Activated CD8-positive, alpha-beta T cell treated with anti-CD3 and anti-CD28 coated beads, Interleukin-2, amount 10 ng/mL, durations not matched to agents 7 days and 5 days (primary cell): ENCODE measurements at regions of chr10 and their contacts with region 1.

Region 1: GRCh38 chr10:6401562-6402348 is 178.3 kb downstream of the PRKCQ start:
- DNase-seq: peak; percentile 75
- ATAC-seq: peak; percentile 92
- H3K4me3 Mint-ChIP-seq: no peak overlapping the region
- H3K27ac Mint-ChIP-seq: peak overlapping the region; percentile 15
- H3K4me1 Mint-ChIP-seq: peaks cover 41% of the 10 kb centered on the region
- H3K27me3 Mint-ChIP-seq: peaks cover 6% of the 10 kb centered on the region

Region 2: GRCh38 chr10:6088721-6089390 is 312.9 kb before region 1 on chr10 and contains the start of gene RBM17:
- CTCF ChIA-PET with region 1: interaction called, 30 read pairs
- POLR2A ChIA-PET with region 1: no interaction called
- DNase-seq: peak; percentile 98
- ATAC-seq: peak; percentile 85
- H3K4me3 Mint-ChIP-seq: peak within 1 kb of the TSS; percentile 98
- H3K27ac Mint-ChIP-seq: peak within 1 kb of the TSS; percentile 88
- H3K4me1 Mint-ChIP-seq: peaks cover 79% of the 10 kb centered on the region
- H3K27me3 Mint-ChIP-seq: no peaks in the 10 kb centered on the region
- total RNA-seq, gene RBM17: 213 to 217 TPM

Region 3: GRCh38 chr10:6151087-6151977 is 250.4 kb before region 1 on chr10:
- CTCF ChIA-PET with region 1: interaction called, 23 read pairs
- POLR2A ChIA-PET with region 1: interaction called, 4 read pairs
- DNase-seq: peak; percentile 73
- ATAC-seq: peak; percentile 84
- H3K4me3 Mint-ChIP-seq: peak overlapping the region; percentile 67
- H3K27ac Mint-ChIP-seq: peak overlapping the region; percentile 86
- H3K4me1 Mint-ChIP-seq: peaks cover 62% of the 10 kb centered on the region
- H3K27me3 Mint-ChIP-seq: no peaks in the 10 kb centered on the region

Region 4: DNA sequence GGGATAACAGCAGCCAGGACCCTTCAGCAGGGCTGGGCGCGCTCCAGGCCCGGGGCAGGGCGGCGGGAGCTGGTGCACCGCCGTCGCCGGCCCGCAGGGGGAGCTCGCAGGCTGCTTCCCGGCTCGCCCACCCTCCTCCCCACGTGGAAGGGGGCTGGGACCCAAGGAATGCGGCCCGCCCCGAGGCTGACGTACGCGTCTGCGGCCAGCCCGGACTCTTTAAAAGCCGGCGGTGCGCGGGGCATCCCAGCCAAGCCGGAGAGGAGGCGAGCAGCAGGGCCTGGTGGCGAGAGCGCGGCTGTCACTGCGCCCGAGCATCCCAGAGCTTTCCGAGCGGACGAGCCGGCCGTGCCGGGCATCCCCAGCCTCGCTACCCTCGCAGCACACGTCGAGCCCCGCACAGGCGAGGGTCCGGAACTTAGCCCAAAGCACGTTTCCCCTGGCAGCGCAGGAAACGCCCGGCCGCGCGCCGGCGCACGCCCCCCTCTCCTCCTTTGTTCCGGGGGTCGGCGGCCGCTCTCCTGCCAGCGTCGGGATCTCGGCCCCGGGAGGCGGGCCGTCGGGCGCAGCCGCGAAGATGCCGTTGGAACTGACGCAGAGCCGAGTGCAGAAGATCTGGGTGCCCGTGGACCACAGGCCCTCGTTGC is 198.9 kb before region 1 on chr10 and contains the start of gene PFKFB3:
- CTCF ChIA-PET with region 1: interaction called, 226 read pairs
- POLR2A ChIA-PET with region 1: interaction called, 41 read pairs
- DNase-seq: peak; percentile 95
- ATAC-seq: peak; percentile 66
- H3K4me3 Mint-ChIP-seq: peak within 1 kb of the TSS; percentile 100
- H3K27ac Mint-ChIP-seq: peak within 1 kb of the TSS; percentile 96
- H3K4me1 Mint-ChIP-seq: peaks cover 44% of the 10 kb centered on the region
- H3K27me3 Mint-ChIP-seq: no peaks in the 10 kb centered on the region
- total RNA-seq, gene PFKFB3: 93.0 to 97.3 TPM

Region 5: DNA sequence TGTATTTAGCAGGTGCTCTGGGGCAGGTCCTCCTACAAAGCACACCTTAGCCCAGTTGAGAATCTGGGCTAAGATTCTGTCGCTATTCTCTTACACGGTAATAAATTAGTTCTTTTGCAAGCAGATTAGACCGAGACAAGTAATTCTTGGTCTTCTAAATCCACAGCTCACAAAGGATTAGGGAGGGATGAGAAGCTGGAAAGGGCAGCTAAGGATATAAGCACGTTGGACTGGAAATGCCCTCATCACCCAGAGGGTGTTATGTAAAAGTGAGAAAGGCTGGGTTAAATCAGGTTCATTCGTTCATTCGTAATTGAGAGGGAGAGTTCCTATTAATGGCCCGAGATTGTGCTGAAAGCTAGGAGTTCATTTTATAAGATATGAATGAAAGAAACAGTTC is 157.2 kb before region 1 on chr10:
- CTCF ChIA-PET with region 1: interaction called, 12 read pairs
- POLR2A ChIA-PET with region 1: no interaction called
- DNase-seq: no peak
- ATAC-seq: no peak
- H3K4me3 Mint-ChIP-seq: no peak overlapping the region
- H3K27ac Mint-ChIP-seq: no peak overlapping the region
- H3K4me1 Mint-ChIP-seq: peaks cover 30% of the 10 kb centered on the region
- H3K27me3 Mint-ChIP-seq: no peaks in the 10 kb centered on the region

Region 6: GRCh38 chr10:6300106-6300783 is 101.5 kb before region 1 on chr10:
- CTCF ChIA-PET with region 1: interaction called, 10 read pairs
- POLR2A ChIA-PET with region 1: no interaction called
- DNase-seq: peak; percentile 58
- ATAC-seq: peak; percentile 77
- H3K4me3 Mint-ChIP-seq: peak overlapping the region; percentile 59
- H3K27ac Mint-ChIP-seq: peak overlapping the region; percentile 95
- H3K4me1 Mint-ChIP-seq: peaks cover 57% of the 10 kb centered on the region
- H3K27me3 Mint-ChIP-seq: no peaks in the 10 kb centered on the region

Region 7: GRCh38 chr10:6364893-6365292 is 36.9 kb before region 1 on chr10:
- CTCF ChIA-PET with region 1: interaction called, 17 read pairs
- POLR2A ChIA-PET with region 1: no interaction called
- DNase-seq: no peak
- ATAC-seq: no peak
- H3K4me3 Mint-ChIP-seq: no peak overlapping the region
- H3K27ac Mint-ChIP-seq: no peak overlapping the region
- H3K4me1 Mint-ChIP-seq: no peaks in the 10 kb centered on the region
- H3K27me3 Mint-ChIP-seq: no peaks in the 10 kb centered on the region

Region 8: GRCh38 chr10:6458814-6459213 is 57.1 kb after region 1 on chr10:
- CTCF ChIA-PET with region 1: no interaction called
- POLR2A ChIA-PET with region 1: no interaction called
- DNase-seq: peak; percentile 60
- ATAC-seq: peak; percentile 55
- H3K4me3 Mint-ChIP-seq: no peak overlapping the region
- H3K27ac Mint-ChIP-seq: peak overlapping the region; percentile 43
- H3K4me1 Mint-ChIP-seq: peaks cover 23% of the 10 kb centered on the region
- H3K27me3 Mint-ChIP-seq: no peaks in the 10 kb centered on the region

Region 9: GRCh38 chr10:6570893-6571292 is 169.1 kb after region 1 on chr10:
- CTCF ChIA-PET with region 1: no interaction called
- POLR2A ChIA-PET with region 1: no interaction called
- DNase-seq: no peak
- ATAC-seq: no peak
- H3K4me3 Mint-ChIP-seq: no peak overlapping the region
- H3K27ac Mint-ChIP-seq: peak overlapping the region; percentile 46
- H3K4me1 Mint-ChIP-seq: peaks cover 86% of the 10 kb centered on the region
- H3K27me3 Mint-ChIP-seq: no peaks in the 10 kb centered on the region

Region 10: DNA sequence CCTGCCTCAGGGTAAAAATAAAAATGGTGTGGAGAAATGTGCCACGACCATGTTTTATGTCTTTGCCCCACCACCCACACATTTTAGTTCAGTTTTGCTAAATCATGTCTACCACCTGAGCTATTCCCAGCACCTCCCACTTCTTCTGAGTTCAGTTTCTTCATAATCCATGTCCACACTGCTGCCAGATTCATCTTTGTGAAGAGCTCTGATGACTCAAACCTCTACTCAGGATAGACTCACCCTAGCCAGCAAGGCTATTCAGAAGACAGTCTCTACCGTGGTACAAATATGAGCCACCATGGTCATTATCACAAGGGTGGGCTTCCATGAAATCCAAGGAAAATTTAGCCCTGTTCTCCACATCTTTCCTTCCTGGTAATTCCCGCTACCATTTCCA is 409.4 kb after region 1 on chr10:
- CTCF ChIA-PET with region 1: no interaction called
- POLR2A ChIA-PET with region 1: no interaction called
- DNase-seq: no peak
- ATAC-seq: no peak
- H3K4me3 Mint-ChIP-seq: no peak overlapping the region
- H3K27ac Mint-ChIP-seq: no peak overlapping the region
- H3K4me1 Mint-ChIP-seq: no peaks in the 10 kb centered on the region
- H3K27me3 Mint-ChIP-seq: peaks cover 19% of the 10 kb centered on the region